Cardiac septum (tissue), 1 donor: ENCODE measurements at regions of chr2 and their contacts with region 1.

Region 1: DNA sequence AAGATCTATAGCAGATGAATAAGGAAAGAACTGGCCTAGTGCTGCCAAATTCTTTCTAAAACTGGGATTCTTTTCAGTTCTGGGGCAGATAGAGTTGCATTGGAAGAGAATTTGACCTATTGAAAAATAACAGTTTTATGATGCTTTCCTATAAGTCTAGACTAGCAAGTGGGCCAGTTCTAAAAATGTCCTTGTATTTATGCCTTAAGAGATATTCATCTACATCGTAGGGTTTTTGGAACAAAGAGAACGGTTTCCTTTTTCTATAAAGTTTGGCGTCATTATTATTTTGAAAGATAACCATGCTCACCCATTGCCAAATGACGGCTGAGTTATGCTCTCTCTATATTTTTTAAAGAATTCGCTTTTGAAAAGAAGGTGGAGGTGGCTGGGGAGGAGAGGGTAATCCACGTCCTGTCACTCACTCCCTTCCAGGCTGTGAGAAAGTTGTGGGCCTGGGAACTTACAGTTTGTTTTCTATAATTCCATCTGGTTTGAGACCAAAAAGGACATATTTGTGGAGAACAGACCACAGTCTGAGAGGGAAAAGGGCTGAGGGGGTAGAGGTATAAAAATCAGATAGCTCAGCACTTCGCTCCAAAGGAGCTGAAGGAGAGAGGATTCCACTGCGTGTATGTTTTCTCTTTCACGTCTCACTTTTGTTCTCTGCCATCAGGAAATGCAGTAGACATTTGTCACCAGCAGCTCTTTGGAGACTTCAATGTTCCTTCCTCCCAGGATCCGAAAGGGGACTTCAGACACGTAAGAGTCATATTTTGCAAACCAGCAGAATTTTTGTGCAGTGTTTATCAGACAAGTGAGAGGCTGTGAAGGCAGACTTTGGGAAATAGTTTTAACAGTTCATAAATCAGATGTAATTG is 281.9 kb upstream of the FN1 start:
- DNase-seq: no peak

Region 2: GRCh38 chr2:215332872-215333595 is 384.7 kb before region 1 on chr2:
- intact Hi-C with region 1: no loop called
- DNase-seq: no peak

Region 3: DNA sequence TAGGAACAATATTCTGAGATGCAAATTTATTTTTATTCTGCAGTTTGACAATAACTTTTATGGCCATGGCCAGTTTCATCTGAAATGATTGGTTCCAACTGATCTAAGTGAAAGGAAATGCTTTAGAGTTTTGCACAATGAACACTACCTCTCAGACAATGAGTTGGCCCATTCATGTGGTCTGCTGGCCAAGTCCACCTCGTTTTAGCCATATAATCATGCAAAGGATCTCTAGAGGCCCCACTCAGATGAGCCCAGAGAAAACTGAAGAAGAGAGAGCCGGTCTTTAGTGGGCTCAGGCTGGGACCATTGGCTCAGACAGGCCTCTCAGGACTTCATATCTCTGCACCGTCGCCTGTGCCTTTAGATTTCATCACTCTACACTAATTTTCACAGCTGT is 41.0 kb after region 1 on chr2:
- intact Hi-C with region 1: loop called (anchors 2 kb)
- DNase-seq: no peak